ENCODE measurements at regions of chr11 and their contacts with region 1.

Region 1: GRCh38 chr11:71448257-71449171 is at the start of gene DHCR7:
- DNase-seq: peak; percentile 97
- ATAC-seq: peak; percentile 89
- H3K4me3 Mint-ChIP-seq: peak within 1 kb of the TSS; percentile 88
- H3K27ac Mint-ChIP-seq: peak within 1 kb of the TSS; percentile 90
- H3K4me1 Mint-ChIP-seq: peaks cover 43% of the 10 kb centered on the region
- H3K27me3 Mint-ChIP-seq: no peaks in the 10 kb centered on the region
- total RNA-seq, gene DHCR7: 57.3 to 64.0 TPM

Region 2: DNA sequence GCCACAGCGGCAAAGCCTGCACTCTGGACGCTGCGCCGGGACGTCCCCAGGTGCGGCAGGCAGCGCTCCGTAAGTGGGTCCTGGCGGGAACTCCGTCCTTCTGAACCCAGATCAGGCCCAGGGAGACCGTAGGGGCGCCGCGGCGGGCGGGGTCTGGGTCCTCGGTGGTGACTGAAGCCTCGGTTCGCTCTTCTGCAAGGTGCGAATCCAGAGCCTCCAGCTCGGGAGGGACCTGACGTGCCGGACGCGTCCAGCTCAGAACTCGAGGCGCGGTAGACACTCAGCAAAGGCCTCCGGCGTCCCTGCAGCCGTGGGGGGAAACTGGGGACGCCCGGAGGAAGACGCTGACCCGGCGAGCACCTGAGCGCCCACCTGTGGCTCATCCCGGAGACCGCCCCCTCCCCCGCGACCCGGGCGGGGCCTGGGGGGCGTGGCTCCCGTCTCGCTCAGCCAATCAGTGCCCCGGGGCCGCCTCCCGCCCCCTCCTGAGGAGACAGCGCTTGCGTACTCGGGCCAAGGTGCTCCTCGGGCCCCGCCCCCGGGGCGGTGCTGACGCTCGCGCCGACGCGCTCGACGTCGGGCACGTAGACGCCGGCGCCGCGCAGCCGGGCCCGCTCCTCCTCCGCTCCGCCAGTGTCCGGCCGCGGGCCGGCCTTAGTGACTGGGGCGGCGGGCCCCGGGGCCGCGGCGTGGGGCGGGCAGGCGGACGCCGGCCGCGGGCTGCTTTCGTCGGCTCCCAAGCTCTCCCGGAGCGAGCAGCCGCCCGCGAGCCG is 1178.2 kb before region 1 on chr11 and contains the start of gene PPFIA1:
- CTCF ChIA-PET with region 1: no interaction called
- POLR2A ChIA-PET with region 1: no interaction called
- intact Hi-C with region 1: loop called in 1 of 2 experiments (anchors 2 kb)
- DNase-seq: peak; percentile 97
- ATAC-seq: peak; percentile 95
- H3K4me3 Mint-ChIP-seq: peak within 1 kb of the TSS; percentile 92
- H3K27ac Mint-ChIP-seq: peak within 1 kb of the TSS; percentile 89
- H3K4me1 Mint-ChIP-seq: peaks cover 31% of the 10 kb centered on the region
- H3K27me3 Mint-ChIP-seq: peaks cover 10% of the 10 kb centered on the region
- total RNA-seq, gene PPFIA1: 26.5 to 40.5 TPM

Region 3: DNA sequence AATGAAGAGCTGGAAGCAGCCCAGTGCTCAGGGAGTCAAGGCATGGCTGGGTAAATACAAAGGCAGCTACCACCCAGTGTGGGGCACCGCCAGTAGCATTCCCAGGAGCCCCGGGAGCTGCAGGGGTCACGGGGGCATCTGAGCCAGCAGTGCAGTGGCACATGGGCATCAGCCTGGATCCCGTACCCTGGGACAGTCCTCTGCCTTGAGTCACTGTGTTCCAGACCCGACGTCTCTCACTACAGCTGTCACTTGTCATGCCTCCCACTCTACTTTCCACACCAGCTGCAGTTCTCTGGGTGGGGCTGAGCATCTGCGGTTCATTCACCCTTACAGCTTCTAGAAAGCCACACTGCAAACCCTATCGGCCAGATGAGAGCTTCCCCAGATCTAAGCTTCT is 29.9 kb before region 1 on chr11:
- CTCF ChIA-PET with region 1: no interaction called
- POLR2A ChIA-PET with region 1: no interaction called
- intact Hi-C with region 1: no loop called
- DNase-seq: peak; percentile 20
- ATAC-seq: no peak
- H3K4me3 Mint-ChIP-seq: no peak overlapping the region
- H3K27ac Mint-ChIP-seq: no peak overlapping the region
- H3K4me1 Mint-ChIP-seq: no peaks in the 10 kb centered on the region
- H3K27me3 Mint-ChIP-seq: peaks cover 5% of the 10 kb centered on the region

Region 4: DNA sequence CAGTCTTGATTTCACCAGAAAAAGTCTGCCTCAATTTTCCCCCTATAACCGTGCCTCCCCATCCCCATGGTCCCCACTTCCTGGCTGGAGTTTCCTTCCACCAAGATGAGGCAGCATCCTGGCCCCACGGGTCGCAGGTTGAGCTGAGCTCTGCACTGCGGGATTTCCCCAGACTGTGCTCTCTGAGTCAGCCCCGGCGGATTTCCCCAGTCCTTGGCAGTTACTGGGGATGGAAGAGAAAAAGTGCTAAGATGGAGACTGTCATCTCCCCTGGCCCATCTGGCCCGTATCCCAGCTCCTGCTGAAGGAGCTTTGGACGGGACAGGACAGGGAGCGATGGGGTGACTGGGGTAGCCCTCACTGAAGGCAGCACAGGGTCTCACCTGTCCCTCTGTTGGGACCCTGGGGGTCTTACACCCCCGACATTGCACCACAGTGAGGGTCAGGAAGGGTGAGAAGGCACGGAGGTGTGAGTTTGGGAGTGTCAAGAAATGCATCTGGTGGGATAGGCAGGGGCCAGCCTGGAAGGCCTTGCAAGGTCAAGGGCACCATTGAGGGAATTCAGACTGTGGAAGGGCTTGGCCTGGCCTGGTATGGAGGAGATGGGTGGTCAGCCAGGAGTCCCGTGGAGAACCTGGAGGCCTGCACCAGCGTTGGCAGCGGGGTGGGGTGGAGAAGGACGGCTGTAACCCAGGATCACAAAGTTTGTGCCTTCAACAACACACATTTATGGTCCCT is 41.0 kb after region 1 on chr11:
- CTCF ChIA-PET with region 1: no interaction called
- POLR2A ChIA-PET with region 1: no interaction called
- intact Hi-C with region 1: loop called in 1 of 2 experiments (anchors 1 kb)
- DNase-seq: peak; percentile 87
- ATAC-seq: peak; percentile 99
- H3K4me3 Mint-ChIP-seq: no peak overlapping the region
- H3K27ac Mint-ChIP-seq: peak overlapping the region; percentile 89
- H3K4me1 Mint-ChIP-seq: peaks cover 21% of the 10 kb centered on the region
- H3K27me3 Mint-ChIP-seq: no peaks in the 10 kb centered on the region

Region 5: GRCh38 chr11:71787098-71787823 is 338.7 kb after region 1 on chr11:
- CTCF ChIA-PET with region 1: no interaction called
- POLR2A ChIA-PET with region 1: no interaction called
- intact Hi-C with region 1: loop called (anchors 1 to 5 kb)
- DNase-seq: peak; percentile 97
- ATAC-seq: peak; percentile 97
- H3K4me3 Mint-ChIP-seq: peak overlapping the region; percentile 84
- H3K27ac Mint-ChIP-seq: peak overlapping the region; percentile 95
- H3K4me1 Mint-ChIP-seq: peaks cover 24% of the 10 kb centered on the region
- H3K27me3 Mint-ChIP-seq: no peaks in the 10 kb centered on the region

Region 6: GRCh38 chr11:72080256-72080974 is 631.9 kb after region 1 on chr11 and contains the starts of genes LRRC51 and NUMA1:
- CTCF ChIA-PET with region 1: no interaction called
- POLR2A ChIA-PET with region 1: no interaction called
- intact Hi-C with region 1: loop called in 1 of 2 experiments (anchors 1 kb)
- DNase-seq: peak; percentile 100
- ATAC-seq: peak; percentile 96
- H3K4me3 Mint-ChIP-seq: peak within 1 kb of the TSS; percentile 91
- H3K27ac Mint-ChIP-seq: peak within 1 kb of the TSS; percentile 94
- H3K4me1 Mint-ChIP-seq: peaks cover 37% of the 10 kb centered on the region
- H3K27me3 Mint-ChIP-seq: no peaks in the 10 kb centered on the region
- total RNA-seq, gene LRRC51: 7.7 to 11.6 TPM
- total RNA-seq, gene NUMA1: 154 to 167 TPM

Measured in activated CD4-positive, alpha-beta T cell treated with anti-CD3 and anti-CD28 coated beads for 36 hours (primary cell).